ENCODE measurements at regions of chr17 and their contacts with region 1.

Region 1: DNA sequence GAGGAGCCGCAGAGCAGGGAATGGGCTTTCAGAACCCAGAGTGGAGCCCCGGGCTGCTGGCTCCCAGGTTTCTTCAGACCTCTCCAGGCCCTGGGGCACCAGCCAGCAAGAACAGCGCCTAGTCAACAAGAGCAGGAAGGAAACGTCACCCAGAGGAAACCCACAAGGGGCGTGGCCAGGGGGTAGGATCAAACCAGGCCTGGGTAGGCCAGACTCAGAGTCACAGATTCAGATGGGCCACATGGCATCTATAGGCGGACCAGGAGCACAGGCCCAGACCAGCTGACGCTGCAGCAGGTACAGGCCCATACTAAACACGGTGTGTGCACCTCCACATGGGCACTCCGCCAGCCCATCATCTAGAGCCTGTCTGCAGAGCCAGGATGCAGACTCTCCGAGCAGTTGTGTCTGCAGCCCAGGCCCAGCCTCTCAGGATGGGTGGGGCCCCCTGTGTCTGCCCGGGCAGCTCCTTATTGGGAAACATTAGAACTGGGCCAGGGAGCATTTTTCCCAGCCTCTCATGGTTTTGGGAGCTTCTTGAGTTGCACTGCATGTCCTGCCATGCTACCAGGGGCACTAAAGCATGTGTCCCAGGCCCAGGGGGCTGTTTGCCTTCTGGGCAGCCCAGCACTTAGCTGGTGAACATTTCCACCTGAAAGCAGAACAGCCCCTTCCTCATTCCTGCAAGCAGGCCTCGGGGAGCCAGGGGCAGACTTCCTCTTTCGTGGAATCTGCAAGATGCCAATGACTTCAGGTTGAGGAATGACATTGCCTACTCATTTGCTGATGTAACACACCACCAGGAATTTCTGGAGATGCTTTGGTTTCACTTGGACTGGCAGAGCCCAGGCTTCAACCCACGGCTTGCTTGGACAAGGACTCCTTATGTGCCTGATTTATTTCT is at the start of gene NLRP1:
- ATAC-seq: peak; percentile 61 to 90 (median 71)
- H3K4me3 ChIP-seq: no peak within 1 kb of the TSS
- H3K27ac ChIP-seq: no peak within 1 kb of the TSS
- H3K4me1 ChIP-seq: peaks cover 0 to 7% of the 10 kb centered on the region in 2 donors
- total RNA-seq, gene NLRP1: 8.4 to 993 (median 67.8) TPM

Region 2: DNA sequence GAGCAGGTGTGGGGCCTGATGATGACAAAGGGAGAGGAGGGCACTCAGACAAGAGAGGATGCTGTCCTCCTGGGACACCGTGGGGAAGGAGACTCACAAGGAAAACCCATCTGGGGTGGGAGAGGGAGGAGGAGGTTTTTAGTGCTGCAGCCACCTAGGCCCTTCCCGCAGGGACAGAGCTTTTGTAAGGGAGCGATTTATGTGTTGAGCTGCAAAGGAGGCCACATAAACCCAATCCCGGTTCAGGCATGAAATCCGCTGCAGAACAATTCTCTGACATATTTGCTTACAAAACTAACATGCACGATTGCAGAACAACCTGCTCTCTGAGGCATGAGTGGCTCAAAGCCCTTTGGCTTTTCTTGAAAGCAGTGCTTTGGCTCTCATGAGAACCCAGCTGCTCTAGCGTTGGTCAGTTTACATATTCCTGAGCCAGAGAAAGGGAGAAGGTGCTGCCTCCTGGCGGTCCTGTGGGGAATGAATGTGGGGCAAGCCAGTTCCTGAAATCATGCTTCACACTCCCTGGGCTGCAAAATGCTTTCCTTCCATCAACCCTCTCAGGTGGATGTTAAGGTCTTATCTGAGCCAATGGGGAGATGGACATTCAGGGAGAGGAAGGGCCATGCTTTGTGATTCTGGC is 122.1 kb after region 1 on chr17:
- in situ Hi-C with region 1: loop called in 2 of 9 experiments (anchors 10 to 25 kb)
- ATAC-seq: peak; percentile 59 to 91 (median 87)
- H3K4me3 ChIP-seq: no peak overlapping the region
- H3K27ac ChIP-seq: peak overlapping the region; percentile 14 to 65
- H3K4me1 ChIP-seq: peaks cover 18 to 20% of the 10 kb centered on the region in 2 donors

Region 3: DNA sequence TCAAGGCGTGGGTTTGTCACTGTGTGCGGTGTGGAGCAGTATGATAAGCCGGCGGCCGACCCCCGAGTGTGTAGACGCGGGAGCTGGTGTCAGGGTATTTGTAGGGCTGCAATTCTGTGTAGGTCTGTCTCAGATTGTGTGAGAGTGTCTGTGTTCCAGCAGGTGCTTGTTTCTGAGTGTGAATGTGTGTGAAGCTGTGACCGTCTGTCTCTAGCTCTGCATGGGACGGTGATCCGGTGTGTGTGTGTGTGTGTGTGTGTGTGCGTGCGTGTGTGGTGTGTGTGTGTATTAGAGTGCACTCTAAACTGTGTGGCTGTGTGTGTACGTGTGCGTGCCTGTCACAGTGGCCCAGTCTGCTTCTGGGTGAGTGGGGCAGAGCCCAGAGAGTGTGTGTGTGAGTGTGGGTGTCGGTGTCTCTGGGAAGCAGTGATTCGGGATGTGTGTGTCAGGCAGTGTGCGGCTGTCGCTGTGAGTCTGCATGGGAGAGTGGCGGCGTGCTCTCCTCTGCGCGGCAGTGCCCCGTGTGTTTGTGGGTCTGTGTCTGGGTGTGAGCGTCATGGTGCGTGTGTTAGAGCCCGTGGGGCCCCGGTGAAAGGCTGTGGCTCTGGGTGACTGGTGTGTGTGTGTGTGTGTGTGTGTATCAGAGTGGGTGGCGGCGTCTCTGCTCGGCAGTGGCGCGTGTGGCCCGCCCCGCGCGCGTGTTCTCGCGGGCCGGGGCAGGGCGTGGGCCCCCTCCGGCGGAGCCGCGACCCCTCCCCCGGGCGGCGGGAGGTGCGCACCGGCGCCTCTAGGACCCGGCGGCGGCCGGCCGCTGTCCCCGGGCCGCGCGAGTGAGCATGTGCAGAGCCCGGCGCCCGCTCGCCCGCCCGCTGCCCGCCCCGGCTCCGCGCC is 485.1 kb after region 1 on chr17 and contains the start of gene WSCD1:
- in situ Hi-C with region 1: loop called in 2 of 9 experiments (anchors 25 kb)
- ATAC-seq: peak; percentile 66 to 83 (median 74)
- H3K4me3 ChIP-seq: peak within 1 kb of the TSS; percentile 73 to 93 (median 77)
- H3K27ac ChIP-seq: peak within 1 kb of the TSS in 1 of 2 donors; percentile 46
- H3K4me1 ChIP-seq: peaks cover 25 to 30% of the 10 kb centered on the region in 2 donors
- total RNA-seq, gene WSCD1: 0.10 to 28.3 (median 22.9) TPM in 7 of 8 experiments, not detected in the other

Region 4: GRCh38 chr17:6413065-6413464 is 828.4 kb after region 1 on chr17:
- in situ Hi-C with region 1: loop called in 1 of 9 experiments (anchors 10 kb)
- ATAC-seq: peak; percentile 21 to 70 (median 44)
- H3K4me3 ChIP-seq: no peak overlapping the region
- H3K27ac ChIP-seq: no peak overlapping the region
- H3K4me1 ChIP-seq: peaks cover 4 to 6% of the 10 kb centered on the region in 2 donors

Region 5: DNA sequence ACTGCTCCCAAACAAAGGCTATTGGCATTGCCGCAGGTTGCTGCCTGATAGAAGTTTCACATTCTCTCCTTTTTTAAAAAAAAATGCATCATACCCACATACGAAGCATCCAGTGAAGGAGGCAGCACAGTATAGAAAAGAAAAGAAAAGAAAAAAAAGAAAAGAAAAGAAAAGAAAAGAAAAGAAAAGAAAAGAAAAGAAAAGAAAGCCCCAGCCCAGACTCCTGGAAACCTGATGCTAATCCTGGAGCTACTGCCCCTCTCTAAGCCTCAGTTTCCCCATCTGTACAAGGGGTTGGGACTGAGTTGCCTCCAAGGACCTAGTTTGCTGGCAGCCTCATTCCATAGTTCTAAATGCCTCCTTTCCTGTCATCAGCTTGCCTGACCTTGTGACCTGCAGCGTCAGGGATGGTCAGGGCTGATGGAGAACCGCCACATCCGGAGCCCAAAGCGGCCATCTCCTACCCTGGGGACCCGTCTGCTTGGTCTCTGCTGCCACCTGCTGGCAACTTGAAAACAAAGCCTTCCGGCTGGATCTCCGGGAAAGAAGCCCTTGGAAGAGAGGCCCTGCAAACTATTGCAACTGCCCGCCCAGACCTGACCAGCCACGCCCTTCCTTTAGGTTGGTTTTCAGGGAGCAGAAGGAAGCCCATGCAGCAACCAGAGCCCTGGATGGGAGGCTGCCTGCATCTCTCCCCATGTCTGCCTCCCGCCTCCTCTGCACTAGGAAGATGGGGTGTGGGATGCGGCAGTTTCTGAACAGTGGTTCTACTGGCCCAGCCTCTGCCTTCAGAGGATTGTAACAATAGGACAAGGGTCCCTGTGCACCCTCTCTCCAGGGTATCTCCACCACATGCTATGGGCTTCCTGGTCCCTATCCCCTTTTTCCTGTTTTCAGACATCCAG is 837.3 kb after region 1 on chr17:
- in situ Hi-C with region 1: loop called in 6 of 9 experiments (anchors 10 to 25 kb)
- ATAC-seq: peak; percentile 91 to 96 (median 93)
- H3K4me3 ChIP-seq: no peak overlapping the region
- H3K27ac ChIP-seq: no peak overlapping the region
- H3K4me1 ChIP-seq: peaks cover 0 to 2% of the 10 kb centered on the region in 2 donors

Region 6: DNA sequence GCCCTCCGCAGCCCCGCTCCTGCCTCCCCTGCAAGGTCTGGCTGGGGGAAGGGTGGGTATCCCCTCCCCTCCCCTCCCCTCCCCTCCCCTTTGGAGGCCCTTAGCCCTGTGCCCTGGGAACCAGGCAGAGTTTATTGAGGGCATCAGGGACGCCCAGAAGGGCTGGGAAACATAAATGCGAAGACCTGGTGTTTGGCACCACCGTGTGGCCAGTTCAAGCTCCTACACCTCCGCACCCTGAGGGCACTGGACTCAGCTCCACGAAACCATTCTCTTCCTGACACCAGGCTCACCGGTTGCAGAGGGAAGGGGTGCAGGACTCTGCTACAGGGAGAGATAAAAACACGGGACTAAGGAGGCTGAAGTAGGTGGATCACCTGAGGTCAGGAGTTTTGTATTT is 851.3 kb after region 1 on chr17:
- in situ Hi-C with region 1: loop called in 3 of 9 experiments (anchors 10 to 25 kb)
- ATAC-seq: peak; percentile 81 to 99 (median 84)
- H3K4me3 ChIP-seq: no peak overlapping the region
- H3K27ac ChIP-seq: no peak overlapping the region
- H3K4me1 ChIP-seq: peaks cover 13 to 15% of the 10 kb centered on the region in 2 donors

Region 7: GRCh38 chr17:6443692-6444569 is 859.3 kb after region 1 on chr17 and contains the start of gene PIMREG:
- in situ Hi-C with region 1: loop called in 3 of 9 experiments (anchors 10 to 25 kb)
- ATAC-seq: peak; percentile 90 to 97 (median 92)
- H3K4me3 ChIP-seq: peak within 1 kb of the TSS; percentile 39 to 57 (median 47)
- H3K27ac ChIP-seq: peak within 1 kb of the TSS; percentile 86 to 87
- H3K4me1 ChIP-seq: peaks cover 16 to 19% of the 10 kb centered on the region in 2 donors
- total RNA-seq, gene PIMREG: 0.71 to 47.6 (median 3.5) TPM in 7 of 8 experiments, not detected in the other

Measured in motor neuron (in vitro differentiated cells).